KBM-7 (cell line): ENCODE measurements at regions of chr12 and their contacts with region 1.

Region 1: GRCh38 chr12:9999016-9999415 is at the start of gene CLEC1B:
- DNase-seq: no peak

Region 2: DNA sequence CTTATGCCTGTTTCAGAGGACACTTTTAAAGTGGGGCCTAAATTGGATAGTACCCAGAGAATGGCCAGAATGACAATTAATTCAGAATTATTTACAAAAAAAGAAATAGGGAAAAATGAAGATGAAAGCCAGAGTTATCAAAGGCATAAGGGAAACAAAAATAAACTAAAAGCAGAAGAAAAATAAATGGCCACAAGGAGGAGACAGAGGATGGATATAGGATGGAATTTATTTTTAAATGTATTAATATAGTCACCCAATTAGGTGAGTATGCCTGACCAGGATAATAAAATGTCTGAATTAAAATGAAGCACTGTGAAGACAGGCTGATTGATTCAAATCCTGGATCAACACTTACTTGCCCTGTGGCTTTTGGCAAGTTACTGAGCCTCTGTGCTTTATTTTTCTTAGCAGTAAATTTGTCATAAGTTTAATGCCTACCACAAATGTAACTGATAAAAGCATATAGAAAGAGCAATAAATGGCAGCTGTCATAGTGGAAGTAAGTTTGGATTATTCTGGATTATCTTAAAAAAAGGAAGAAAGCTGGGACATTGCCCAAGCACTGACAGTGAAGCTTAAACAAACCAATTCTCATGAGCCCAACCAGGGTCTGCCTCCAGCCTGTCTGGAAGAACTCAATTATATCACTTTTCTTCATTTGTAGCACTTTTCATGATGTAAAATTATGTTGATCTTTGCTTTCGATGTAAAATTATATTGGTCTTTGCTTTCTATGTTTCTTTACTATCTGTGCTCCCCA is 34.9 kb after region 1 on chr12:
- in situ Hi-C with region 1: loop called (anchors 5 kb)
- DNase-seq: peak; percentile 59

Region 3: GRCh38 chr12:10190558-10191388 is 191.8 kb after region 1 on chr12:
- in situ Hi-C with region 1: no loop called
- DNase-seq: peak; percentile 67